Ascending aorta (tissue), 2 donors: ENCODE measurements at regions of chr4 and their contacts with region 1.

Region 1: GRCh38 chr4:107719922-107720722 is at the start of gene PAPSS1:
- DNase-seq: peak; percentile 90 to 98
- H3K4me3 ChIP-seq: peak within 1 kb of the TSS; percentile 67 to 85
- H3K27ac ChIP-seq: peak within 1 kb of the TSS; percentile 90 to 93
- H3K4me1 ChIP-seq: peaks cover 2 to 9% of the 10 kb centered on the region in 2 donors
- H3K27me3 ChIP-seq: no peaks in the 10 kb centered on the region
- CTCF ChIP-seq: no peak
- total RNA-seq, gene PAPSS1: 17.9 TPM

Region 2: DNA sequence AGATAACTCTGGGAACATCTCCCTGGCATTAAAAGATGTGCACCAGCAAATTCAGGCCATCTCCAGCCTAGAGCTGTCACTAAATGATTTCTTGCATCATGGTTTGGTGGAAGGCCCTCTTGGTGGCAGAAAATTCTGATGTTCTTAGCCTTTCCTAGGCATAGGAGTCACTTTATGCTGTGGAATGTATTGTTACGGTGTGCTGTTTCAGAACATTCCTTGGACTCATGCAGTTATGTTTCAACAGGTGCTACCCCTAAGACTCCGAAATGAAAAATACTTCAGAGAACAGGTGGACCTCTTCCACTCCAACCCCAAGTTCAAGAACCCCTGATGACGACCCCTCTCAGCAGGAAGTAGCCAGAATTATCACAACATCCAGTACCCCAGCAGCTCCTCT is 20.3 kb after region 1 on chr4:
- intact Hi-C with region 1: loop called (anchors 2 kb)
- DNase-seq: no peak
- H3K4me3 ChIP-seq: no peak overlapping the region
- H3K27ac ChIP-seq: peak overlapping the region; percentile 60 to 75
- H3K4me1 ChIP-seq: peaks cover 6 to 8% of the 10 kb centered on the region in 2 donors
- H3K27me3 ChIP-seq: no peaks in the 10 kb centered on the region
- CTCF ChIP-seq: peak in 1 of 3 experiments; percentile 19

Region 3: DNA sequence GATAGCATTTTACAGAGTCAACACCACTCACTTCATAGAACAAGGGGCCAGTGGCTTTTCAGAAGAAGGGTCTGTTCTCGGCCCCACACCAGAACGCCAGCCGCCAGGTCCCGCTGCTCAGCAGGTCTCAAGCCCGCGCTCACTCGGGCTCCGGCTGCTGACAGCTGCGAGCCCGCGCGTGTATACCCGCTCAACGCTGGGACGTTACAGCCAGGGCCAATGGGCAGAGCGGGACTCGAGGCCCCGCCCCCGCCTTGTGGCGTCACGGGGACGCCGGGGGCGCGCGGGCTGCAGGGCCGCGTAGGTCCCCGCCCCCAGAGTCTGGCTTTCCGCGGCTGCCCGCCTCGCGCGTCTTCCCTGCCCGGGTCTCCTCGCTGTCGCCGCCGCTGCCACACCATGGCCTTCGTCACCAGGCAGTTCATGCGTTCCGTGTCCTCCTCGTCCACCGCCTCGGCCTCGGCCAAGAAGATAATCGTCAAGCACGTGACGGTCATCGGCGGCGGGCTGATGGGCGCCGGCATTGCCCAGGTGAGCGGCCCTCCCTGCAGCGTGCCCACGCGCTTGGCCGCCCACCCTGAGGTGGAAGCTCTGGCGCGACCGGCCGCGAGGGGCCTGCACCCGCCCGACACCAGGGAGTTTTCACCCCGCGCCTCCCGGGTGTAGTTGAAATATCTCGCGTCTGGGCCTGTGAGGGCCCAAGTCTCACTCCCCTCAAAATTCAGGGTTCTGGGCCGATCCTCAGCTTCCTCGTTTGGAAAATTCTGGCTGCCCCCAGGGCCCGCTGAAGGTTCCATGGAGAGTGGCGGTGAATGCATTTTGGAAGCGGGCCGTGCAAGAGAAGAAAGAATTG is 269.6 kb after region 1 on chr4 and contains the start of gene HADH:
- intact Hi-C with region 1: loop called (anchors 2 kb)
- DNase-seq: peak; percentile 77 to 97
- H3K4me3 ChIP-seq: peak within 1 kb of the TSS; percentile 74 to 79
- H3K27ac ChIP-seq: peak within 1 kb of the TSS; percentile 92 to 93
- H3K4me1 ChIP-seq: peaks cover 3 to 47% of the 10 kb centered on the region in 2 donors
- H3K27me3 ChIP-seq: no peaks in the 10 kb centered on the region
- CTCF ChIP-seq: no peak
- total RNA-seq, gene HADH: 34.3 TPM